H1 (cell line): ENCODE measurements at regions of chr13 and their contacts with region 1.

Region 1: DNA sequence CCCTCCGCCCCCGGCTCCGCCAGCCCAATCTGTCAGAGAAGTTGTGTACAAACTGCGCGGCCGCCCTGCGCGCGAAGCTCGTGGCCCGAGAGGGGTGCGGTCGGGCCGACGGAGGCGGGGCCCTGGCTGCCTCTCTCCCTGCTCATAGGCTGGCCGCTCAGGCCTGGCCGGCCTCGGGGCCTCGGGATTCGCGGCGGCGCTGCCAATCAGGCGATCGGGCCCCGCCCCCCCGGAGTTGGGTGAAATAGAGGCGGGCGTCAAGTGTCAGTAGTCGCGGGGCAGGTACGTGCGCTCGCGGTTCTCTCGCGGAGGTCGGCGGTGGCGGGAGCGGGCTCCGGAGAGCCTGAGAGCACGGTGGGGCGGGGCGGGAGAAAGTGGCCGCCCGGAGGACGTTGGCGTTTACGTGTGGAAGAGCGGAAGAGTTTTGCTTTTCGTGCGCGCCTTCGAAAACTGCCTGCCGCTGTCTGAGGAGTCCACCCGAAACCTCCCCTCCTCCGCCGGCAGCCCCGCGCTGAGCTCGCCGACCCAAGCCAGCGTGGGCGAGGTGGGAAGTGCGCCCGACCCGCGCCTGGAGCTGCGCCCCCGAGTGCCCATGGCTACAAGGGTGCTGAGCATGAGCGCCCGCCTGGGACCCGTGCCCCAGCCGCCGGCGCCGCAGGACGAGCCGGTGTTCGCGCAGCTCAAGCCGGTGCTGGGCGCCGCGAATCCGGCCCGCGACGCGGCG is at the start of gene KLF5:
- DNase-seq: peak; percentile 73 to 98
- H3K4me3 ChIP-seq: peak within 1 kb of the TSS; percentile 53 to 78 (median 58)
- H3K27ac ChIP-seq: no peak within 1 kb of the TSS
- H3K4me1 ChIP-seq: peaks cover 0 to 15% (median 1%) of the 10 kb centered on the region in 4 experiments; a peak in 4 of 7 replicates
- H3K27me3 ChIP-seq: peaks cover 14 to 51% (median 37%) of the 10 kb centered on the region in 4 experiments
- CTCF ChIP-seq: no peak
- EP300 ChIP-seq: no peak
- POLR2A ChIP-seq: peak in 1 of 2 experiments; percentile 59; a peak in 2 of 3 replicates
- RAD21 ChIP-seq: no peak
- total RNA-seq, gene KLF5: 1.7 and 2.3 TPM in 2 replicates

Region 2: GRCh38 chr13:73073050-73073449 is 14.2 kb after region 1 on chr13:
- CTCF ChIA-PET with region 1: interaction called, 17 read pairs
- POLR2A ChIA-PET with region 1: interaction called, 8 read pairs
- DNase-seq: no peak
- H3K4me3 ChIP-seq: no peak overlapping the region
- H3K27ac ChIP-seq: no peak overlapping the region
- H3K4me1 ChIP-seq: peaks cover 0 to 2% (median under 1%) of the 10 kb centered on the region in 4 experiments; a peak in 5 of 7 replicates
- H3K27me3 ChIP-seq: peaks cover 0 to 2% (median 0%) of the 10 kb centered on the region in 4 experiments; a peak in 3 of 7 replicates
- CTCF ChIP-seq: no peak
- EP300 ChIP-seq: no peak
- POLR2A ChIP-seq: no peak
- RAD21 ChIP-seq: no peak